ENCODE measurements at regions of chr12 and their contacts with region 1.

Region 1: DNA sequence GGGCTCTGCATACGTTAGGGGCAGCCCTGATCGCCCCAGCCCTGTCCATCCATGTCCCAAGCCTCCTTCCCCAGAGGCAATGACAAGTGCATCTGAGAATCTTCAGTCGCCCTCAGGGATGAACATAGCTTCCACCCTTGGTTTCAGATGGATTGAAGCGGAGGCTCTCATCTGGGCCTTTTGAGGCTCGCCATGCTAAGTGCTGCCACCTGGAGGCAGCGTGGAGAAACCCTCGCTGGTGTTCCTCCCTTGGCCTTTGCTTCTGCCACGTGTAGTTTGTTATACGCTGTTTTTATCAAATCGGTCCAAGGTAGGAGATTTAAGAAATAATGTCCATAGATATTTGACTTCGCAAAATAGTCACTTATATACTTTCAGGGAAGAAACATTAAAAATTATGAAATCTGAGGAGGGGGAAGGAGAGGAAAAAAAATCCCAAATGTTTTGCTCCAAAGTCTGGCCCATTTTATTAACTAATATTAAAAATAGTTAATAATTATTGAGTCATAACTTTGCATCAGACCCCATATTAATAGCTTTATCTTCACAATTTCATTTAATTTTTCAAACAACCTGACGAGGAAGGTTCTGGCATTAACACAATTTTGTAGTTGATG is 28.8 kb upstream of the LRRC10 start:
- DNase-seq: peak in 1 of 2 donors; percentile 56
- ATAC-seq: peak in 1 of 2 donors; percentile 30
- H3K4me3 ChIP-seq: no peak overlapping the region
- H3K27ac ChIP-seq: no peak overlapping the region
- H3K4me1 ChIP-seq: peaks cover 5 to 12% of the 10 kb centered on the region in 2 donors
- H3K27me3 ChIP-seq: no peaks in the 10 kb centered on the region
- CTCF ChIP-seq: peak; percentile 64 to 87 (median 69)
- POLR2A ChIP-seq: no peak

Region 2: GRCh38 chr12:69359531-69360347 is 279.8 kb before region 1 on chr12 and contains the start of gene YEATS4:
- in situ Hi-C with region 1: no loop called
- intact Hi-C with region 1: loop called (anchors 1 kb)
- DNase-seq: peak; percentile 51 to 76
- ATAC-seq: peak; percentile 90 to 92
- H3K4me3 ChIP-seq: peak within 1 kb of the TSS; percentile 84 to 89 (median 86)
- H3K27ac ChIP-seq: peak within 1 kb of the TSS; percentile 86 to 93 (median 91)
- H3K4me1 ChIP-seq: peaks cover 4 to 13% of the 10 kb centered on the region in 2 donors
- H3K27me3 ChIP-seq: no peaks in the 10 kb centered on the region
- CTCF ChIP-seq: no peak
- POLR2A ChIP-seq: peak; percentile 31 to 51
- total RNA-seq, gene YEATS4: 12.5 to 34.6 (median 25.8) TPM

Region 3: DNA sequence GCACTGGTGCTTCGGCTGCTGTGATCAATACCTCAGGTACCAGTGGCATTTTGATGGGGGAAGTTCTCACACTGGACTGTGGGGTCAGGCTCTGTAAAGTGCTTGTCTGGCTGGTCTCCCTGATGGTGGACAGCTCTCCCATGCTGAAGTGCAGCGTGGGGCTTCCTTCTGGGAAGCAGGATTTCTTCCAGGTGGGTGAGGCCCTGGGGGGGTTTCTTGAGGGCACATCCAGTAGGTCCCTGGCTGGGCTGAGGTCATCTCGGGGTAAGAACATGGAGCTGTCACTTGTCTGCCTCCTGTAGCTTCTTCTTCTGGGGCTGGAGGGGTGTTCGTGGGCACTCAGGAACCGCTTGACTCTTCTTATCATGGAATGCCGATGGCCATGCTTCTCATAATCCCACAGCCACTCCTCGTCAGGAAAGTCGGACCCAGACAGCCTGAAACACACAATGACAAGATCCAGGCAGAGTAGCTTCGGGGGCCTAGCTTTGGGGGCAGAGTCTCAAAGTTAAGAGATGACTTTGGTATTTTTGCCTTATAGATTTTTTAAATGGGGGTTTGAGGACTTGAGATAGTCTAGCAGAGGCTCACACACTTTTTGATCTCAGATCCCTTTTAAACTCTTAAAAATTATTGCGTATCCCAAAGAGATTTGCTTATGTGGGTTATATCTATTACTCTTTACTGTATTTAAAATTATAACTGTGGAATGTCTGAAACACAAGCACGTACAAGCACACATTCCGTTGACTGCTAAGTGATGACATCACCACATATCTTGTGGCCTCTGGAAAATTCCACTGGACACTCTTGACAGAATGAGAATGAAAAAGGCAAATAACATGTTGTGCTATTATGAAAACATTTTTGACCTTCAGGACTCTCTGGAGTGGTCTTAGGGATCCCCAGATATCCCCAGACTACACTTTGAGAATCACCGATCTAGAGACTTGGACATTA is 16.1 kb after region 1 on chr12:
- in situ Hi-C with region 1: no loop called
- intact Hi-C with region 1: loop called (anchors 2 kb)
- DNase-seq: no peak
- ATAC-seq: no peak
- H3K4me3 ChIP-seq: no peak overlapping the region
- H3K27ac ChIP-seq: peak overlapping the region; percentile 80 to 91 (median 86)
- H3K4me1 ChIP-seq: peaks cover 21 to 32% of the 10 kb centered on the region in 2 donors
- H3K27me3 ChIP-seq: no peaks in the 10 kb centered on the region
- CTCF ChIP-seq: no peak
- POLR2A ChIP-seq: no peak

Region 4: GRCh38 chr12:69676257-69677012 is 36.9 kb after region 1 on chr12:
- in situ Hi-C with region 1: no loop called
- intact Hi-C with region 1: no loop called
- DNase-seq: no peak
- ATAC-seq: no peak
- H3K4me3 ChIP-seq: no peak overlapping the region
- H3K27ac ChIP-seq: no peak overlapping the region
- H3K4me1 ChIP-seq: no peaks in the 10 kb centered on the region
- H3K27me3 ChIP-seq: no peaks in the 10 kb centered on the region
- CTCF ChIP-seq: no peak
- POLR2A ChIP-seq: no peak

Region 5: GRCh38 chr12:69688496-69689427 is 49.3 kb after region 1 on chr12:
- in situ Hi-C with region 1: loop called in 1 of 4 experiments (anchors 10 kb)
- intact Hi-C with region 1: loop called (anchors 2 kb)
- DNase-seq: peak; percentile 94 to 98
- ATAC-seq: peak; percentile 80 to 82
- H3K4me3 ChIP-seq: peak overlapping the region in 1 of 4 donors; percentile 5
- H3K27ac ChIP-seq: peak overlapping the region; percentile 77 to 93 (median 90)
- H3K4me1 ChIP-seq: peaks cover 78 to 87% of the 10 kb centered on the region in 2 donors
- H3K27me3 ChIP-seq: no peaks in the 10 kb centered on the region
- CTCF ChIP-seq: no peak
- POLR2A ChIP-seq: peak; percentile 78 to 89

Region 6: DNA sequence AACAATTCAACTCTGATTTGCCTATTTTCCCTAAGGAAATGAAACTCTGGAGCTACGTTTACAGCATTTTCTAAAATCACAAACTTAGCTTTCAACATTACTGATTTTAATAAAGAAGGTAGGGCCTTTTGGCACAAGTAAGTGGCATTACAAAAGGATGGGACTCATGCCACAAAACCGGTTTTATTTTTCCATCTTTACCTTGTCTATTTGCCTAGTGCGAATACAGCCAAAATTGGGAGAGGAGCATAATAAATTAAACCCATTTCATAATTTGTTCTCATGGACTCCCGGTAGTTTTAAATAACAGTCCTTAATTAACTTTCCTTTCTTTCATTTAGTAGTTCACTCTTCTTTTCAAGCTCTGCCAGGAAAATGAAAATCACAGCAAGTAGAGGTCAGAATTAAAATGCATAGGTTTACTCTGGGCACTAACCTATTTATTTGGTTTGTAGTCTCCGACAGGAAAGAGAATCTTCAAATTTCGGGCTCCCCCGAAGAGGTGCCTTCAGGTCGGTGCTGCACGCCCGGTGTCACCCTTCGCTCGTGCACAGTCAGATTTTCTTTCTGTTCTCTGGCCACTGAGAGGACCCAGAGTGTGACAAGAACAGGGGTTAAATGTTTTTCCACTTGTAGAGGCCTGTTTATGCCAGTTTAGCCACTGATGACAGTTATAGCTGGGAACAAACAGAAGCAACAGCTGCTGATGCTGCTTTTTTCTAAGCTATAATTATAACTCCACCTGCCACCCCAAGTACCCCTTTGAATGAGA is 59.4 kb after region 1 on chr12 and contains the start of gene BEST3:
- in situ Hi-C with region 1: loop called in 1 of 4 experiments (anchors 10 kb)
- intact Hi-C with region 1: no loop called
- DNase-seq: peak; percentile 80 to 82
- ATAC-seq: peak; percentile 95 to 98
- H3K4me3 ChIP-seq: peak within 1 kb of the TSS; percentile 50 to 62 (median 56)
- H3K27ac ChIP-seq: peak within 1 kb of the TSS; percentile 77 to 93 (median 90)
- H3K4me1 ChIP-seq: peaks cover 24 to 42% of the 10 kb centered on the region in 2 donors
- H3K27me3 ChIP-seq: no peaks in the 10 kb centered on the region
- CTCF ChIP-seq: no peak
- POLR2A ChIP-seq: peak; percentile 59 to 91
- total RNA-seq, gene BEST3: 61.8 to 163 (median 119) TPM